ENCODE measurements at regions of chr3 and their contacts with region 1.

Region 1: GRCh38 chr3:147915057-147915456 is 505.9 kb downstream of the ZIC1 start:
- DNase-seq: no peak
- ATAC-seq: no peak

Region 2: GRCh38 chr3:146655333-146655996 is 1259.6 kb before region 1 on chr3:
- intact Hi-C with region 1: loop called (anchors 10 kb)
- DNase-seq: no peak
- ATAC-seq: no peak

Measured in Right ventricle myocardium superior (tissue), 1 donor.